AG04450 (cell line): ENCODE measurements at regions of chr20 and their contacts with region 1.

Region 1: GRCh38 chr20:6533761-6534479 is 233.6 kb upstream of the BMP2 start:
- DNase-seq: peak; percentile 80
- H3K4me3 ChIP-seq: peak overlapping the region; percentile 59
- H3K27ac ChIP-seq: peak overlapping the region; percentile 96
- H3K27me3 ChIP-seq: no peaks in the 10 kb centered on the region
- CTCF ChIP-seq: no peak

Region 2: GRCh38 chr20:5797843-5798462 is 736.0 kb before region 1 on chr20:
- CTCF ChIA-PET with region 1: no interaction called
- POLR2A ChIA-PET with region 1: no interaction called
- DNase-seq: no peak
- H3K4me3 ChIP-seq: no peak overlapping the region
- H3K27ac ChIP-seq: no peak overlapping the region
- H3K27me3 ChIP-seq: no peaks in the 10 kb centered on the region
- CTCF ChIP-seq: no peak

Region 3: DNA sequence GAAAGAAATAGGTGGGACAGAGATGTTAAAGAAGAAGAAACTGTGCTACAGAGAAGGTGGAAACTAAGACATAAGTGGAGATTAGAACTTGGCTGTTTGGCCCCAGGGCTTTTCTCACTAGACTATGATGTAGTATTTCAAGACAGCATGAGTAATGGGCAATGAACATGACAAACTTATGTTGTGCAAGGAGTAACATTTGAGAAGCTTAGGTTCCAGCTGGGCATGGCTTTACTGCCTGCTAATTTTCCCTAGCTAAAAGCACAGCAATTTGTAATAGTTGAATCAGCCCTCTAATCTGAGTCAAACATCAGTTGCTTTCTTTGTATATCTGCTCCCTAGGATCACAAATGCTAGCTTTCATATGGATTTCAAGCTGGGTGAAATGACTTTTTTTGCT is 60.7 kb before region 1 on chr20:
- CTCF ChIA-PET with region 1: no interaction called
- POLR2A ChIA-PET with region 1: no interaction called
- DNase-seq: no peak
- H3K4me3 ChIP-seq: no peak overlapping the region
- H3K27ac ChIP-seq: no peak overlapping the region
- H3K27me3 ChIP-seq: no peaks in the 10 kb centered on the region
- CTCF ChIP-seq: no peak

Region 4: GRCh38 chr20:6566821-6567220 is 32.9 kb after region 1 on chr20:
- CTCF ChIA-PET with region 1: no interaction called
- POLR2A ChIA-PET with region 1: interaction called, 10 read pairs
- DNase-seq: peak; percentile 78
- H3K4me3 ChIP-seq: no peak overlapping the region
- H3K27ac ChIP-seq: no peak overlapping the region
- H3K27me3 ChIP-seq: no peaks in the 10 kb centered on the region
- CTCF ChIP-seq: no peak

Region 5: GRCh38 chr20:6575912-6576401 is 42.0 kb after region 1 on chr20:
- CTCF ChIA-PET with region 1: interaction called, 3 read pairs
- POLR2A ChIA-PET with region 1: interaction called, 11 read pairs
- DNase-seq: peak; percentile 58
- H3K4me3 ChIP-seq: no peak overlapping the region
- H3K27ac ChIP-seq: peak overlapping the region; percentile 40
- H3K27me3 ChIP-seq: no peaks in the 10 kb centered on the region
- CTCF ChIP-seq: no peak

Region 6: DNA sequence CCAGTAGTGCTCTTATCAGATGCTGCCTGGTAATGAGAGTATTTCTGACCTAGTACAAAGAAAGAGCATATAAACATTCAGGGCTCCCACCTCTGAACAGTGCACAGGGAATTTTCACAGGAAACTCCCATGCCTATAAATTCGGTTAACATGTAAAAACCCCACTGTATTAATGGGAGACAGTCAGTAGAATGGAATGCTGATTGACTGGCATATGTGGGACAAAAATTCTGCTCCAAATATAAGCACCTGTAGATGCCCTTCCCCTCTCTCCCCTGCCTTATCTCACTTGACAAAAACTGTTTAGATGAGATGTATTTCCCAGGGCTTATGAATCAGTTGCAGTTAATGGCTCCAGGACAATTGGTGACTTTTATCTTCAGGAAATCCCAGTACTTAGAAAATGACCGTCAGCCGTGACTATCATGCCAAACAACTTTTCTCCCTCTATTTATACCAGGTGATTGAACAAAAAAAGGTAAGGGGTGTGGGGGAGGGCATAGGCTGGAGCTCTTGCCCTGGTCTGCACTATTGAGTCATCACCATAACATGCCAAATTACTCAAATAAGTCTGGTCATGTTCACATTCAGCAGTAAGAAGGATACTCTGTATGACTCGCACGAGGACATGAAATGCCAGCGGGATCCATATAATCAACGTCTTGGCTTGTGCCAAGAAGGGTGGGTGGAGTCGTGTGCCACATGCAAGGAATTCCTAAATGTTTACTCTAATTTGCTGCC is 57.1 kb after region 1 on chr20:
- CTCF ChIA-PET with region 1: interaction called, 3 read pairs
- POLR2A ChIA-PET with region 1: interaction called, 14 read pairs
- DNase-seq: no peak
- H3K4me3 ChIP-seq: no peak overlapping the region
- H3K27ac ChIP-seq: no peak overlapping the region
- H3K27me3 ChIP-seq: no peaks in the 10 kb centered on the region
- CTCF ChIP-seq: no peak